Pancreas (tissue), 10 donors: ENCODE measurements at regions of chr10 and their contacts with region 1.

Region 1: GRCh38 chr10:112137154-112137987 is 46.2 kb downstream of the GPAM start:
- DNase-seq: peak; percentile 28 to 90 (median 74)
- ATAC-seq: peak in 3 of 4 donors; percentile 69 to 89 (median 80)
- H3K4me3 ChIP-seq: no peak overlapping the region
- H3K27ac ChIP-seq: no peak overlapping the region
- H3K4me1 ChIP-seq: no peaks in the 10 kb centered on the region
- H3K27me3 ChIP-seq: no peaks in the 10 kb centered on the region
- CTCF ChIP-seq: peak; percentile 84 to 93 (median 84)

Region 2: GRCh38 chr10:111756217-111757061 is 380.9 kb before region 1 on chr10:
- intact Hi-C with region 1: loop called in 1 of 3 experiments (anchors 10 kb)
- DNase-seq: peak; percentile 5 to 59 (median 22)
- ATAC-seq: peak; percentile 40 to 78 (median 63)
- H3K4me3 ChIP-seq: no peak overlapping the region
- H3K27ac ChIP-seq: no peak overlapping the region
- H3K4me1 ChIP-seq: no peaks in the 10 kb centered on the region
- H3K27me3 ChIP-seq: no peaks in the 10 kb centered on the region
- CTCF ChIP-seq: peak in 3 of 4 donors; percentile 12 to 25 (median 18)

Region 3: DNA sequence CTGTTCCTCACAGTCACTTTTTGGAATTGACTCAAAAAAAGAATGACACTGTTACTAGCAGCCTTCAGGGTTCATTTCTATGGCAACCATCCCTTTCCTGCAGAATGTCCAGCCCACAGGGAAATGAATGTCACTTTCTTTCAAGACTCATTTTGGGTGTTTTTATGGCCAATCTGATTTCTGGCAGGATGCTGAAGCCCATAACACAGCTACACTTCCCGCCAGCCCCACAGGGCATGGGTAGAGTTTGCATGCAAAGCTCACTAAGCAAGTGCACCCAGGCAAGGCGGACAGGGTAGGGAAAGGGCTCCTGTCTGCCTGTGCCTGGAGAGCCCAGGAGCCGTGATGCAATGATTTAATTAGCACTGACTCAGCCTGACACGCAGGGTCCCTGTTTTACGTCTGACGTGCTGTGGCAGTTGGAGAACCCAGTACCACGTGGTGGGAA is 72.3 kb after region 1 on chr10:
- intact Hi-C with region 1: no loop called
- DNase-seq: no peak
- ATAC-seq: peak in 1 of 4 donors; percentile 39
- H3K4me3 ChIP-seq: no peak overlapping the region
- H3K27ac ChIP-seq: no peak overlapping the region
- H3K4me1 ChIP-seq: no peaks in the 10 kb centered on the region
- H3K27me3 ChIP-seq: no peaks in the 10 kb centered on the region
- CTCF ChIP-seq: no peak

Region 4: DNA sequence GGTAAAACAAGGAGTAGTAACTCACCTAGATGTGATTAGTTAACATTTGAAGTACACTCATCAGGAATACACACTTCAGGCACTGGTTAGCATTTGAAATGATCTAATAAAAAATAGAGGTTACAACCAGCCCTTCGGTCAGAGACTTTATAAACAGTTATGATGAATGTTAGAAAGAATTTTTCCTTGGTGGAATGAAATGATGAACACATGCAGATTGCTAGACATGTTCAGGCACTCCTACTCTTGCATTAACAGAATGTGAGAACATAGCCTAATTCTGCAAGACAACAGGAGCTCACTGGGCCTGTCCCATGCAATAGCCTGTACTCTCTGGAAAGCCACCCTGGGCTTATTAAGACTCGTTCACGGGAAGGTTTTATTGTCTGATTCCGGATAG is 98.5 kb after region 1 on chr10:
- intact Hi-C with region 1: no loop called
- DNase-seq: no peak
- ATAC-seq: no peak
- H3K4me3 ChIP-seq: no peak overlapping the region
- H3K27ac ChIP-seq: no peak overlapping the region
- H3K4me1 ChIP-seq: no peaks in the 10 kb centered on the region
- H3K27me3 ChIP-seq: no peaks in the 10 kb centered on the region
- CTCF ChIP-seq: no peak